HepG2 (cell line): ENCODE measurements at regions of chr3 and their contacts with region 1.

Region 1: DNA sequence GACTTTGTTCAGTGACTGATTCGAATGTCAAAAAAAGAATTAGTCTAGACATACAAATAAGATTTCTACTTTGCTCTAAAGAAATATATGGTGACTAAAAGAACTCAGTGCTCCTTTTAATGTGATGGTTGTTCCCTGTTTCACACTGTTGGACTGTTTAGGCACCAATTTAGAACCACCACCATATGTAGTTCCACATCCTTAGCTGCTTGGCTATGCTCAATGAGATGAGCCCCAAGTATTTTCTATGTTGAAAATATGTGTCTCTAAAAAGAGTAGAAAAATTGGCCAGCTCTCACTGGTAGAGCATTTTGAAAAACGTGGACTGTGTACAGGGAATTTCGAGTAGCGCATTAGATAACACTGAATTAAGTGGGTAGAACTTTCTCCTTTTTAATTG is 167.3 kb downstream of the GOLIM4 start:
- DNase-seq: no peak
- ATAC-seq: no peak
- H3K4me3 ChIP-seq: no peak overlapping the region
- H3K27ac ChIP-seq: no peak overlapping the region
- H3K4me1 ChIP-seq: no peaks in the 10 kb centered on the region
- H3K27me3 ChIP-seq: no peaks in the 10 kb centered on the region
- CTCF ChIP-seq: no peak
- EP300 ChIP-seq: no peak
- POLR2A ChIP-seq: no peak
- RAD21 ChIP-seq: no peak

Region 2: GRCh38 chr3:168040607-168041208 is 112.3 kb after region 1 on chr3:
- CTCF ChIA-PET with region 1: interaction called, 5 read pairs
- POLR2A ChIA-PET with region 1: no interaction called
- in situ Hi-C with region 1: no loop called
- intact Hi-C with region 1: loop called (anchors 1 kb)
- DNase-seq: peak; percentile 49
- ATAC-seq: peak; percentile 87
- H3K4me3 ChIP-seq: no peak overlapping the region
- H3K27ac ChIP-seq: no peak overlapping the region
- H3K4me1 ChIP-seq: no peaks in the 10 kb centered on the region
- H3K27me3 ChIP-seq: no peaks in the 10 kb centered on the region
- CTCF ChIP-seq: peak; percentile 68
- EP300 ChIP-seq: no peak
- POLR2A ChIP-seq: no peak
- RAD21 ChIP-seq: 0 out of 2 replicates have a peak, but pooled peaks have one; percentile 55